BJ (cell line): ENCODE measurements at regions of chr7 and their contacts with region 1.

Region 1: DNA sequence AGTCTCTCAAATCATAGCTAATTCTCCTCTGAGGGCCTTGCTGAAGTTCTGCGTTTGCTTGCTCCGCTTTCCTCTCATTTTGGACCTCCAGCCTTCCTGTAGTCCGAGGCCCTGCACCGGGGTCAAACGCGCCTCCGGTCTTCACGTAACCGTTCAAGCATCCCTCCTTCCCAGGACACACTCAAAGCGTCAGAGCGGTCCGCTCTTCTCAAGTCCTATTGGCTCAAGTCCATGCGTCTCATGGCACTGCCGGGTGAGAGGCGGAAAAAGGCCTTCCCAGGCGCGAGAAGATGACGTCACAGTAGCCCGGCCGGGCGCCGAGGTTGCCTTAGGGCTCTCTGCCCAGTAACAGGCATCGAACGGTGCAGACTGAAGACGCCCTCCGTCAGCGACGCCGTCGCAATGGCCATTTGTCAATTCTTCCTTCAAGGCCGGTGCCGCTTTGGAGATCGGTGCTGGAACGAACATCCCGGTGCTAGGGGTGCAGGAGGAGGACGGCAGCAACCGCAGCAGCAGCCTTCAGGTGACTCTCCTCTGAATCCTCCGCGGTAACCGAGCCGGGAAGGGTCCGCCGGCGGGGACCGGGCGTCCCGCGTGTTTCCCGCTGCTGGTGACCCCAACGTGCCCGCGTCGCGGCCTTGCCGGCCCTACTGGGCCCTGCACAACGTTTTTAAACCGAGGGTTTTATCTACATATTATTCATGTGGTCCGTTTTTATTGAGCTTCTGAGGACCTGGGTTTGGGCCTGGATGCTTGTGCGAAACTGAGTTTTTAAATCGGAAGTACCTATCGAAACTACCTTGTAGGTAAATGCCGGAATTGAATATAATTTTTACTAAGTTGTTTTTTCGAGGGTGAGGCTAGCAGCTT is at the start of gene NUP42:
- DNase-seq: peak; percentile 90
- H3K4me3 ChIP-seq: peak within 1 kb of the TSS; percentile 79
- H3K27me3 ChIP-seq: no peaks in the 10 kb centered on the region
- CTCF ChIP-seq: no peak
- polyA plus RNA-seq, gene NUP42: 24.5 and 25.8 TPM in 2 replicates

Region 2: GRCh38 chr7:22802426-22802825 is 379.5 kb before region 1 on chr7:
- CTCF ChIA-PET with region 1: no interaction called
- POLR2A ChIA-PET with region 1: no interaction called
- DNase-seq: no peak
- H3K4me3 ChIP-seq: no peak overlapping the region
- H3K27me3 ChIP-seq: no peaks in the 10 kb centered on the region
- CTCF ChIP-seq: no peak

Region 3: DNA sequence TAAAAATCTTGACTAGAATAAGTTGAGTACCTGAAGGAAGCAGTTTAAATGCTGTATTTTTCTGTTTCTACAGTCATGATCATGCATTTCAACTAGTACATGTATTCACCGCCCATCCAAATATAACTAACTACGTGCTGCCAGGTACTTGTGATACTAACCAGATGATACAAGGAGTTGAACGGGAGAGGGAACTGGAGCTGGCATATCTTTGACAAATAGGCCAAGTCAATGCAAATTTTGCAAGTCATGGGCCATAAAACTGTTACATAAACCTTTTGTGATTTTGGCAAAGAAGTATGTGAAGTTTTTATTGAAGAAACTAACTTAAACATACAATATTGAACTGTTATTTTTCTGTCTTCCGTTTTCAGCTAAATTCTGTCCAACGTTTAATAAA is 14.4 kb after region 1 on chr7:
- CTCF ChIA-PET with region 1: interaction called, 15 read pairs
- POLR2A ChIA-PET with region 1: no interaction called
- DNase-seq: no peak
- H3K4me3 ChIP-seq: no peak overlapping the region
- H3K27me3 ChIP-seq: no peaks in the 10 kb centered on the region
- CTCF ChIP-seq: no peak

Region 4: GRCh38 chr7:23261843-23262452 is 80.0 kb after region 1 on chr7:
- CTCF ChIA-PET with region 1: interaction called, 15 read pairs
- POLR2A ChIA-PET with region 1: no interaction called
- DNase-seq: no peak
- H3K4me3 ChIP-seq: no peak overlapping the region
- H3K27me3 ChIP-seq: no peaks in the 10 kb centered on the region
- CTCF ChIP-seq: peak; percentile 96

Region 5: GRCh38 chr7:23273141-23273599 is 91.3 kb after region 1 on chr7:
- CTCF ChIA-PET with region 1: interaction called, 32 read pairs
- POLR2A ChIA-PET with region 1: no interaction called
- DNase-seq: no peak
- H3K4me3 ChIP-seq: no peak overlapping the region
- H3K27me3 ChIP-seq: no peaks in the 10 kb centered on the region
- CTCF ChIP-seq: peak; percentile 91

Region 6: GRCh38 chr7:23645822-23646221 is 463.9 kb after region 1 on chr7:
- CTCF ChIA-PET with region 1: no interaction called
- POLR2A ChIA-PET with region 1: no interaction called
- DNase-seq: no peak
- H3K4me3 ChIP-seq: no peak overlapping the region
- H3K27me3 ChIP-seq: no peaks in the 10 kb centered on the region
- CTCF ChIP-seq: no peak